ENCODE measurements at regions of chr4 and their contacts with region 1.

Region 1: GRCh38 chr4:91220315-91220714 is 1083.5 kb upstream of the GRID2 start:
- DNase-seq: no peak
- H3K4me3 ChIP-seq: no peak overlapping the region
- CTCF ChIP-seq: no peak
- POLR2A ChIP-seq: no peak

Region 2: DNA sequence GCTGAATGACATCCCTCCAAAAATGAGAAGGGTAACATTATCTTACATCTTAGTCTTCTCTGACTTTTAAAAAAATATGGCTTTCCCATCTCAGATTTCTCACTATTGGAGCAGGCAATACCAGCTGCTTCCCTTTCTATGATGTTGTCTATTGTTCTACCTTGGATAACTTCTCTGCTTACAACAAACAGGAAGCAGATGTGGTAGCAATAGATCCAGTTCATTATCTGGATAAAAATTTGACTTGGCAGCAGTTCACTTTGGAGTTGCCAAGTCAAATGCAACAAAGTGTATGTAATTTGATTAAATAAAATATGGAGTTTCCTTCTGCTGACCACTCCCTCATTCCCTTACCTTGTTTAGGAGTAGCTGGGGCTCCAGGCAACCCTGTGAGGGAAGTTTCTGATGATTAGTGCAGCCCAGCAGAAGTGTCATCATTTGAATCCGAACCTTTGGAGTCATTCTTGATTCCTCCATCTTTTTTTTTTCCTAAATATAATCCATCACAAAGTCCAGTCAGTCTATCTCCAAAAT is 1840.7 kb before region 1 on chr4:
- intact Hi-C with region 1: no loop called
- DNase-seq: no peak
- H3K4me3 ChIP-seq: no peak overlapping the region
- CTCF ChIP-seq: no peak
- POLR2A ChIP-seq: no peak

Region 3: GRCh38 chr4:91567594-91567993 is 347.3 kb after region 1 on chr4:
- intact Hi-C with region 1: loop called (anchors 10 kb)
- DNase-seq: no peak
- H3K4me3 ChIP-seq: no peak overlapping the region
- CTCF ChIP-seq: no peak
- POLR2A ChIP-seq: no peak

Measured in lower leg skin (tissue), 4 donors.